ENCODE measurements at regions of chr7 and their contacts with region 1.

Region 1: GRCh38 chr7:142385491-142386340 is 127.9 kb upstream of the PRSS58 start:
- DNase-seq: peak; percentile 57
- ATAC-seq: peak; percentile 64
- H3K4me3 Mint-ChIP-seq: peak overlapping the region; percentile 66
- H3K27ac Mint-ChIP-seq: no peak overlapping the region
- H3K4me1 Mint-ChIP-seq: peaks cover 20% of the 10 kb centered on the region
- H3K27me3 Mint-ChIP-seq: peaks cover 1% of the 10 kb centered on the region
- CTCF ChIP-seq: peak; percentile 63

Region 2: GRCh38 chr7:142263598-142264380 is 121.9 kb before region 1 on chr7:
- CTCF ChIA-PET with region 1: no interaction called
- POLR2A ChIA-PET with region 1: no interaction called
- intact Hi-C with region 1: no loop called
- DNase-seq: no peak
- ATAC-seq: peak; percentile 42
- H3K4me3 Mint-ChIP-seq: no peak overlapping the region
- H3K27ac Mint-ChIP-seq: no peak overlapping the region
- H3K4me1 Mint-ChIP-seq: no peaks in the 10 kb centered on the region
- H3K27me3 Mint-ChIP-seq: peaks cover 14% of the 10 kb centered on the region
- CTCF ChIP-seq: no peak

Region 3: GRCh38 chr7:142301923-142302550 is 83.7 kb before region 1 on chr7:
- CTCF ChIA-PET with region 1: interaction called, 13 read pairs
- POLR2A ChIA-PET with region 1: no interaction called
- intact Hi-C with region 1: no loop called
- DNase-seq: no peak
- ATAC-seq: peak; percentile 29
- H3K4me3 Mint-ChIP-seq: no peak overlapping the region
- H3K27ac Mint-ChIP-seq: no peak overlapping the region
- H3K4me1 Mint-ChIP-seq: peaks cover 16% of the 10 kb centered on the region
- H3K27me3 Mint-ChIP-seq: peaks cover 12% of the 10 kb centered on the region
- CTCF ChIP-seq: peak; percentile 72

Region 4: DNA sequence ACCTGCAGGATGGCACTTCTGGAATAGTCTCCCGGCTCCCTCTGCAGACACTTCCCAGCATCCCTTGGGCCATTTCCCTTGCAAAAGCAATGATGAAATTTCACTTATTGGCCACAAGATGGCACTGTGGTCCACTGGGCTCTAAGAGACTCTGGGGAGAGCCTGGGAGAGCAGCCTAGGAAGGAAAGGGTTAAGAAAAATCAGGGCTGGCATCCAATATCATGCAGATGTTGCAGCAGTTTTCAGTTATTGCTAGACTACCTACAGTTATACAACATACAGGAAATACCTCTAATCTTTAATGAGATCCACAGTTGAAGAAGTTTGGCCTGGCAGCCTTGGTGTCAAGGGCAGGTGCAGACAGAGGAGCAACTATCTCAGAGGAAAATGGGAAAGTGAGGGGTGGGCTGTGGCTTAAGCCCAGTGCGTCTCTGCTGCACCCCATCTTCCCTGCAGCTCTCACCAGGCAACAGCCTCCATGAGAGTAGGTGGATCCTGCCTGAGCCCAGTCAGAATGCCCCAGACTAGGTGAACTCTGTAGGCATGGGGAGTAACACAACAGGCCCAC is 27.7 kb before region 1 on chr7:
- CTCF ChIA-PET with region 1: interaction called, 101 read pairs
- POLR2A ChIA-PET with region 1: interaction called, 3 read pairs
- intact Hi-C with region 1: no loop called
- DNase-seq: peak; percentile 51
- ATAC-seq: peak; percentile 81
- H3K4me3 Mint-ChIP-seq: no peak overlapping the region
- H3K27ac Mint-ChIP-seq: no peak overlapping the region
- H3K4me1 Mint-ChIP-seq: peaks cover 24% of the 10 kb centered on the region
- H3K27me3 Mint-ChIP-seq: peaks cover 4% of the 10 kb centered on the region
- CTCF ChIP-seq: peak; percentile 78

Region 5: GRCh38 chr7:142412551-142413193 is 27.0 kb after region 1 on chr7:
- CTCF ChIA-PET with region 1: interaction called, 15 read pairs
- POLR2A ChIA-PET with region 1: no interaction called
- intact Hi-C with region 1: no loop called
- DNase-seq: peak; percentile 58
- ATAC-seq: peak; percentile 84
- H3K4me3 Mint-ChIP-seq: no peak overlapping the region
- H3K27ac Mint-ChIP-seq: peak overlapping the region; percentile 12
- H3K4me1 Mint-ChIP-seq: peaks cover 6% of the 10 kb centered on the region
- H3K27me3 Mint-ChIP-seq: no peaks in the 10 kb centered on the region
- CTCF ChIP-seq: peak; percentile 76

Region 6: DNA sequence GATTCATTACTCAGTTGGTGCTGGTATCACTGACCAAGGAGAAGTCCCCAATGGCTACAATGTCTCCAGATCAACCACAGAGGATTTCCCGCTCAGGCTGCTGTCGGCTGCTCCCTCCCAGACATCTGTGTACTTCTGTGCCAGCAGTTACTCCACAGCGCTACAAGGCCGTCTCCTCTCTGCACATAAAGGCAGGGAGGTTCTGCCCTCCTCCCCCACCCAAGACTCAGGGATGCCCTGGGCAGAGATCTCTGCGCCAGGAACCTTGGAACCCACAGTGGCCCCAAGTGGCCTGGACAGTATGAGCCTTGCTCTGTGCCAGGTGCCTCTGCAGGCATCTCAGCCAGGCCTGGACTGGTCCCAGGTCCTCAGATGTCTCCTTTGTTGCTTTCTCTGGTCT is 65.6 kb after region 1 on chr7:
- CTCF ChIA-PET with region 1: no interaction called
- POLR2A ChIA-PET with region 1: no interaction called
- intact Hi-C with region 1: no loop called
- DNase-seq: no peak
- ATAC-seq: no peak
- H3K4me3 Mint-ChIP-seq: peak overlapping the region; percentile 35
- H3K27ac Mint-ChIP-seq: no peak overlapping the region
- H3K4me1 Mint-ChIP-seq: peaks cover 10% of the 10 kb centered on the region
- H3K27me3 Mint-ChIP-seq: peaks cover 2% of the 10 kb centered on the region
- CTCF ChIP-seq: no peak

Region 7: GRCh38 chr7:142478479-142479072 is 92.9 kb after region 1 on chr7:
- CTCF ChIA-PET with region 1: interaction called, 13 read pairs
- POLR2A ChIA-PET with region 1: no interaction called
- intact Hi-C with region 1: no loop called
- DNase-seq: peak; percentile 41
- ATAC-seq: peak; percentile 50
- H3K4me3 Mint-ChIP-seq: no peak overlapping the region
- H3K27ac Mint-ChIP-seq: peak overlapping the region; percentile 25
- H3K4me1 Mint-ChIP-seq: peaks cover 77% of the 10 kb centered on the region
- H3K27me3 Mint-ChIP-seq: no peaks in the 10 kb centered on the region
- CTCF ChIP-seq: peak; percentile 67

Measured in activated CD8-positive, alpha-beta T cell treated with anti-CD3 and anti-CD28 coated beads for 36 hours (primary cell).